Cardiac septum (tissue), 1 donor: ENCODE measurements at regions of chr2 and their contacts with region 1.

Region 1: GRCh38 chr2:111121828-111122630 is 1.3 kb downstream of the BCL2L11 start:
- DNase-seq: peak; percentile 94

Region 2: GRCh38 chr2:111162718-111163331 is 40.8 kb after region 1 on chr2:
- intact Hi-C with region 1: loop called (anchors 2 kb)
- DNase-seq: no peak